Activated CD4-positive, alpha-beta memory T cell treated with anti-CD3 and anti-CD28 coated beads for 36 hours (primary cell): ENCODE measurements at regions of chr18 and their contacts with region 1.

Region 1: GRCh38 chr18:42157878-42158277 is 202.8 kb downstream of the PIK3C3 start:
- DNase-seq: no peak
- H3K4me3 Mint-ChIP-seq: no peak overlapping the region
- H3K27ac Mint-ChIP-seq: no peak overlapping the region
- H3K4me1 Mint-ChIP-seq: no peaks in the 10 kb centered on the region
- H3K27me3 Mint-ChIP-seq: no peaks in the 10 kb centered on the region

Region 2: DNA sequence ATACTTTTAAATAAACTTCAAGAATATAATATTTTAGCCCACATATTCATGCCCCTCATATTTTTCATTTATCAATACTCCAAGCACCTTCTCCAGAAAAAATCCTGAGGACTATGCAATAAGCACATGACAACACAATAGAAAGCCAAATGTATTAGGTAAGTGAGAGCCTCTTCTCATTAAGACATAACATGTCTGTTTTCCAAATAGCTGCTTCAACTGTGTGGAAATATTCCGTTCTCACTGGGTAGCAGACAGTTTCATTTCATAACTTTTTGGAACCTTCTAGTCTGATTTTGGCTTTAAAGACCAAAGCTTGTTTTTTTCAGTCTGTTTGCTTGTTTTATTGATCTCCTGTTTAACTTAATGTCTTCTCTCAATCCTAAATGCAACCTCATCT is 65.0 kb before region 1 on chr18:
- CTCF ChIA-PET with region 1: no interaction called
- POLR2A ChIA-PET with region 1: no interaction called
- intact Hi-C with region 1: loop called (anchors 10 kb)
- DNase-seq: no peak
- H3K4me3 Mint-ChIP-seq: no peak overlapping the region
- H3K27ac Mint-ChIP-seq: no peak overlapping the region
- H3K4me1 Mint-ChIP-seq: no peaks in the 10 kb centered on the region
- H3K27me3 Mint-ChIP-seq: no peaks in the 10 kb centered on the region